ENCODE measurements at regions of chr14 and their contacts with region 1.

Region 1: GRCh38 chr14:21203470-21204166 is 47.8 kb upstream of the OR5AU1 start:
- DNase-seq: no peak
- H3K4me3 ChIP-seq: no peak overlapping the region
- H3K4me3 Mint-ChIP-seq: no peak overlapping the region
- H3K27ac ChIP-seq: no peak overlapping the region
- H3K27ac Mint-ChIP-seq: peak overlapping the region in 6 of 7 donors; percentile 38 to 75 (median 54)
- H3K4me1 ChIP-seq: no peaks in the 10 kb centered on the region
- H3K4me1 Mint-ChIP-seq: peaks cover 15 to 27% (median 18%) of the 10 kb centered on the region in 4 donors
- H3K27me3 ChIP-seq: no peaks in the 10 kb centered on the region
- H3K27me3 Mint-ChIP-seq: no peaks in the 10 kb centered on the region

Region 2: GRCh38 chr14:21215130-21215878 is 11.7 kb after region 1 on chr14:
- CTCF ChIA-PET with region 1: interaction called, 3 read pairs
- POLR2A ChIA-PET with region 1: interaction called, 6 read pairs
- intact Hi-C with region 1: loop called (anchors 2 kb)
- DNase-seq: no peak
- H3K4me3 ChIP-seq: no peak overlapping the region
- H3K4me3 Mint-ChIP-seq: peak overlapping the region; percentile 14 to 74 (median 58)
- H3K27ac ChIP-seq: peak overlapping the region; percentile 23
- H3K27ac Mint-ChIP-seq: peak overlapping the region; percentile 45 to 90 (median 71)
- H3K4me1 ChIP-seq: peaks cover 72% of the 10 kb centered on the region
- H3K4me1 Mint-ChIP-seq: peaks cover 38 to 77% (median 62%) of the 10 kb centered on the region in 4 donors
- H3K27me3 ChIP-seq: no peaks in the 10 kb centered on the region
- H3K27me3 Mint-ChIP-seq: no peaks in the 10 kb centered on the region